ENCODE measurements at regions of chr1 and their contacts with region 1.

Region 1: DNA sequence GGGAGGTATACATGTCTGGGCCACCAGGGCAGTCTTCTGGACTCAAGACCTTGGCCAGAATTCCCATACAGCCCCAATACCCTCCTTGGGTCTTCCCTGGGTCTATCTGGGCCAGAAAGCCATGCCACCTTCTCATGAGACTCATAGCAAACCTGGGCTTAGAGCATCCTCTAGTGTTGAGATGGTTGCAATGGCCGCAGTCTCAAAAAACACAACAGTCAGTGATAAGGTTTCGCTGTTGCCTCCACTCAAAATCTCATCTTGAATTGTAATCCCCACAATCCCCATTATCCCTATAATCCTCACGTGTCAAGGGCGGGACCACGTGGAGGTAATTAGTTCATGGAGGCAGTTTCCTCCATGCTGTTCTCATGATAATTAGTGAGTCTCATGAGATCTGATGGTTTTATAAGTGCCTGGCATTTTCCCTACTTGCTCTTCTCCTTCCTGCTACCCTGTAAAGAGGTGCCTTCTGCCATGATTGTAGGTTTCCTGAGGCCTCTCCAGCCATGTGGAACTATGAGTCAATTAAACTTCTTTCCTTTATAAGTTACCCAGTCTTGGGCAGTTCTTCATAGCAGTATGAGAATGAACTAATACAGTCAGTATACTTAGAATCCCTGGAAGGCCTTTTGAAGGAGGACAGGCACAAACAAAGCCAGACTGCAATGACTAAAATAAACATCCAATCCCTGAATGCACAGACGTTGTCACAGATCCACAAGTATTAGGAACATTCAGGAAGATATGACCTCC is 77.0 kb downstream of the CTH start:
- DNase-seq: no peak
- H3K4me3 ChIP-seq: no peak overlapping the region
- H3K27ac ChIP-seq: no peak overlapping the region
- H3K27me3 ChIP-seq: no peaks in the 10 kb centered on the region
- CTCF ChIP-seq: peak in 54 of 56 donors; percentile 22 to 82 (median 57)

Region 2: DNA sequence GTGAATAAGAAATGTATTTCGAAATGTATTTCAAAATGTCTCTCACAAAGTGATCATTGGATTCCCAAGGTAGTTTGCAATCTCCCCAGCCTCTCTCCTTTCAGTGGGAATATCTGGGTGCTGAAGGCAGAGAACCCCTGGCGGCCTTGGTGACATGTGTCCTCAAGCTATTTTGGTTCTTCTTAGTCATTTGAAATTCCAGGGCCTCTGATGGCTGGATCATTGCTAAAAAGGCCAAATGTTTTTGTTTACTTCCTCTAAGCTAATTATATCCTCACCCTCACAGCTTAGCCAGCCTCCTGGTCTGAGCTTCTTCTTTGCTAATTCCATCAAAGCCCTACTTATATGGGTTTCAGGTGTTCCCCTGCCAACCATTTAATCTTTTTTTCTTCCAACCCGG is 353.9 kb before region 1 on chr1:
- intact Hi-C with region 1: loop called in 1 of 2 experiments (anchors 5 kb)
- DNase-seq: no peak
- H3K4me3 ChIP-seq: no peak overlapping the region
- H3K27ac ChIP-seq: peak overlapping the region in 3 of 59 donors; percentile 6 to 35 (median 22)
- H3K27me3 ChIP-seq: no peaks in the 10 kb centered on the region
- CTCF ChIP-seq: no peak

Region 3: DNA sequence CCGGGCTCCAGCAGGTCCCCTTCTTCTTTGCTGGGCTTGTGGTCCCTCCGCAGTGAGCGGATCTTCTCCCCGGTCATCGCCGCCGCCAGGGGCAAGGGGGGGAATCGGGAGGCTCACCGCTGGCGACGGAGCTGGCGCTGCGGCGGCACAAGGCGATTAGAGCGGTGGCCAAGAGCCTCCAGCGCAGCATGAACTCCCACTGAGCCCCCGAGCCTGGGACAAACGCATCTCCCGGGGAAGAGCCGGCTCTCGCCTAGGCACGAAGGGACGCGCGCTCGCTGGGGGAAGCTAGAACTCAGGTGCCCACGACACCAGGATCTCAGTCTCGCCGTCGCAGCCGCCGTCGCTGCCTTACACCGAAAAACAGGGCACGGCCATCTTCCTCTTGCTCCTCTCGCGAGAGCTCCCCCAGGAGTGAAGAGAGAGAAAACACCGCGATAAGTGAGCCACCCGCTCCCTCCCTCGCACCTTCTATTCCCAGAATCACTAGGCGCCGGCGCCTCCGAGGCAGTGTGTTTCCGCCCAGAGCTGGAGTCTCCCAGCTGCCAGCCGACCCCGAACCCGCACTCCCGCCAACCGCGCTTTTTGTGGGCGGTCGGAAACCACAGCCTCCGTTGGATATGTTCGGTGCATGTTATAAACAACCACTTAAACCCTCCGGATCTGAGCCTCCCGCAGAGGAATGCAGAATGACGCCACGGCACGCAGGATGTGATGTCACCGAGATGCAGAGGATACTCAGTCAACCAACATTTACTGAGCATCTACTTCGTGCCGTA is 133.6 kb before region 1 on chr1 and contains the start of gene ANKRD13C:
- intact Hi-C with region 1: no loop called
- DNase-seq: peak; percentile 76 to 97 (median 92)
- H3K4me3 ChIP-seq: peak within 1 kb of the TSS; percentile 68 to 97 (median 87)
- H3K27ac ChIP-seq: peak within 1 kb of the TSS; percentile 85 to 99 (median 96)
- H3K27me3 ChIP-seq: no peaks in the 10 kb centered on the region
- CTCF ChIP-seq: peak in 37 of 56 donors; percentile 3 to 59 (median 32)
- total RNA-seq, gene ANKRD13C: 25.3 to 47.0 (median 36.2) TPM

Region 4: GRCh38 chr1:70436622-70437251 is 51.4 kb before region 1 on chr1:
- intact Hi-C with region 1: loop called in 1 of 2 experiments (anchors 5 kb)
- DNase-seq: no peak
- H3K4me3 ChIP-seq: no peak overlapping the region
- H3K27ac ChIP-seq: no peak overlapping the region
- H3K27me3 ChIP-seq: no peaks in the 10 kb centered on the region
- CTCF ChIP-seq: peak in 49 of 56 donors; percentile 12 to 66 (median 42)

Region 5: DNA sequence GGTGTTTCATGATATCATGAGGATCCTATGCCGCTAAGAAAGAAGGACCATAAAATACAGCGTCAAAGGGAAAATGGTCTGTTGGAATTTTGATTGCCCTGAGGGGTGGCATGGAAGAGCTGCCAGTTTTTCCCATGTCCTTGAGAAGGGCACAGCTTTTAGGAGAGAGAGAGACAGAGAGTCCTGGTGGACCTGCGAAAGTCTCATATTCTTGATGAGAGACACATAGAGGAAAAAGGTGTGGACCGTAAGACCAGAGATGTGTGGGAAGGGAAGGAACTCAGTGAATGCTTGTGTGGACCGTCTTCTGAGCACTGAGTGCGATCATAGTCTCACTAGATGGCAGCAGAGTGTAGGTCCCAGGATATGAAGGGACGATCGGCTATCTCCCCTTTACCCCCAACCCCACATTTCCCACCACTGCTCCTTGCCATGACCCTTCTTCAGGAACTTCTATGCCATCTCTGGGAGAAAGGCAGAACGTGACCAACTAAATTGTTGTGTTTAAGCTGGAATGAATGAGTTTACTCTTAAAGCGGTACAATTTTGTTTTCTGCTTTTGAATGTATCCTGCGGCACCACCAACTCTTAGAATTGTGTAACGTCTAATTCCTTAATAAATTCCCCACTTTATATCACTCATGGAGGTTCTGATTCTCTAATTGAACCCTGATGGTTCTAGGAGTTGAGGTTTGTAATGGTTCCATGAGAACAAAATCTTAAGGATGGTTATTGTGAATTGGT is 40.7 kb after region 1 on chr1:
- intact Hi-C with region 1: no loop called
- DNase-seq: peak in 1 of 10 donors; percentile 19
- H3K4me3 ChIP-seq: peak overlapping the region in 3 of 59 donors; percentile 15 to 29 (median 25)
- H3K27ac ChIP-seq: no peak overlapping the region
- H3K27me3 ChIP-seq: peaks cover 0 to 14% (median 0%) of the 10 kb centered on the region in 45 donors
- CTCF ChIP-seq: peak in 54 of 56 donors; percentile 26 to 77 (median 56)

Region 6: GRCh38 chr1:71532343-71532742 is 1044.3 kb after region 1 on chr1:
- intact Hi-C with region 1: no loop called
- DNase-seq: no peak
- H3K4me3 ChIP-seq: no peak overlapping the region
- H3K27ac ChIP-seq: no peak overlapping the region
- H3K27me3 ChIP-seq: no peaks in the 10 kb centered on the region
- CTCF ChIP-seq: no peak

Measured in dorsolateral prefrontal cortex (tissue), 120 donors.